HepG2 (cell line): ENCODE measurements at regions of chr11 and their contacts with region 1.

Region 1: GRCh38 chr11:93652161-93652597 is 9.3 kb upstream of the CEP295 start:
- DNase-seq: peak; percentile 17
- ATAC-seq: peak; percentile 40
- H3K4me3 ChIP-seq: no peak overlapping the region
- H3K27ac ChIP-seq: no peak overlapping the region
- H3K4me1 ChIP-seq: no peaks in the 10 kb centered on the region
- H3K27me3 ChIP-seq: peaks cover 0 to 3% of the 10 kb centered on the region in 2 experiments; a peak in 1 of 5 replicates
- CTCF ChIP-seq: peak; percentile 64
- EP300 ChIP-seq: no peak
- POLR2A ChIP-seq: no peak
- RAD21 ChIP-seq: no peak

Region 2: DNA sequence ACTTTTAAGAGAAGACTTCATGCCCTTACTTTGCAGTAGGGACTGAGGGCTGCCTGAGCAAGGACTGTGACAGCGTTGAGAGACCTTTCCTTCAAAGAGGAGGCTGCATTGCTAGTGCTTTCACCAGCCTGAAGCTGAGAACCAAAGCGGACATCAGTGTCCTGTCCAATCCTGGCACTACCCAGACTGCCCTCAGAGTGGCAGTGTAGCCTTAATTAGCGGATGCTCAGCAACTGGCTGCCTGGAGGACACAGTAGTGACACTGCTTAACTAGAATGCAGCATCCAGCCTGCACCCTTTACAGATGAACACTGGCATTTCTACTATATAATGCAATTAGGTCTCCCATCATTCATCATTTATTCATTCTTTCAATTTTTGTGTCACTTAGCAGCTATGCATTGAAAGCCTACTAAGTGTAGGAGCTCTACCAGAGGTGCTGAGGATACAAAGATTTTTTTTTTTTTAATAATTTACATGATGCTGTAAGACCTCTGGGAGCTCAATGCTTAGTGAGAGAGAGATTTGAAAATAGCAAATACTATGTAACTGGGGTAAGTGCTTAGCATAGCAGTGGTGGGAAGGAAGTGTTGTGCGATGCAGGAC is 417.5 kb before region 1 on chr11:
- CTCF ChIA-PET with region 1: interaction called, 31 read pairs
- POLR2A ChIA-PET with region 1: no interaction called
- in situ Hi-C with region 1: loop called (anchors 5 kb)
- intact Hi-C with region 1: loop called (anchors 1 kb)
- DNase-seq: peak; percentile 61
- ATAC-seq: peak; percentile 99
- H3K4me3 ChIP-seq: no peak overlapping the region
- H3K27ac ChIP-seq: no peak overlapping the region
- H3K4me1 ChIP-seq: no peaks in the 10 kb centered on the region
- H3K27me3 ChIP-seq: no peaks in the 10 kb centered on the region
- CTCF ChIP-seq: peak; percentile 95
- EP300 ChIP-seq: no peak
- POLR2A ChIP-seq: no peak
- RAD21 ChIP-seq: peak; percentile 88

Region 3: GRCh38 chr11:93444617-93445073 is 207.5 kb before region 1 on chr11:
- CTCF ChIA-PET with region 1: no interaction called
- POLR2A ChIA-PET with region 1: no interaction called
- in situ Hi-C with region 1: no loop called
- intact Hi-C with region 1: no loop called
- DNase-seq: peak; percentile 60
- ATAC-seq: peak; percentile 38; the same call in 2 of the 3 replicates
- H3K4me3 ChIP-seq: no peak overlapping the region
- H3K27ac ChIP-seq: no peak overlapping the region
- H3K4me1 ChIP-seq: peaks cover 9% of the 10 kb centered on the region; the same call in 1 of the 2 replicates
- H3K27me3 ChIP-seq: no peaks in the 10 kb centered on the region; a peak in 1 of 5 replicates
- CTCF ChIP-seq: no peak
- EP300 ChIP-seq: no peak
- POLR2A ChIP-seq: no peak
- RAD21 ChIP-seq: no peak

Region 4: GRCh38 chr11:93552874-93553273 is 99.3 kb before region 1 on chr11:
- CTCF ChIA-PET with region 1: no interaction called
- POLR2A ChIA-PET with region 1: no interaction called
- in situ Hi-C with region 1: no loop called
- intact Hi-C with region 1: no loop called
- DNase-seq: peak; percentile 81
- ATAC-seq: peak; percentile 94
- H3K4me3 ChIP-seq: no peak overlapping the region
- H3K27ac ChIP-seq: no peak overlapping the region
- H3K4me1 ChIP-seq: peaks cover 26% of the 10 kb centered on the region
- H3K27me3 ChIP-seq: peaks cover 0 to 18% of the 10 kb centered on the region in 2 experiments; a peak in 2 of 5 replicates
- CTCF ChIP-seq: no peak
- EP300 ChIP-seq: peak in 1 of 2 experiments; percentile 54; a peak in 1 of 4 replicates
- POLR2A ChIP-seq: no peak
- RAD21 ChIP-seq: no peak